MCF 10A (cell line): ENCODE measurements at regions of chr12 and their contacts with region 1.

Region 1: DNA sequence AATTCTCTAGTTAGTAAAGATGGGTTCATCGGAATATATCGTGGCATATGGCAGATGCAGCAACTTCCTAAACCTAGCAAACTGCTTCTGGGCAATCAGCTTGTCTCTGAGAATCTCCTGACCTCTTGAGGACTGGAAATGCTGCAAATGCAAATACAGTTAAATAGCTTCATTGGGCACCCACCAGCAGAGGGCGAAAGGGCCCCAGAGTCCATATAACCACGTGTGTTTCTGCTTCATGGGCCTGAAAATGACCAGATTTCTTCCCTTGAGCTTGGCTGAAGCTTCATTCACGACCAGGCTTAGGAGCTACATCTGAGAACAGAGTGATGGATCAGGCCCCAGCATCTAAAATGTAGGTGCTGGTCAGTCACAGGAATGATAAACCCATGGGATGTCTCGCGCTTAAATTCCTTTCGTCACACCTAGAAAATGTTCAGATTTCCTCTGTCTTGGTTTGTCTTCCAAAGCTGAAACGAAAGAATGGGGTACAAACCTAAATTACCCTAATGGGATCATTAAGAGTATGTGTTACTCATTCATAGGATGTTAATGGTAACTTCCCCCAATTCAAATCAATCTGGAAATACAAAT is 1482.5 kb upstream of the TMEM132C start:
- DNase-seq: peak; percentile 64
- H3K4me3 Mint-ChIP-seq: no peak overlapping the region
- H3K27ac Mint-ChIP-seq: no peak overlapping the region
- H3K4me1 Mint-ChIP-seq: no peaks in the 10 kb centered on the region
- H3K27me3 Mint-ChIP-seq: peaks cover 28% of the 10 kb centered on the region
- CTCF ChIP-seq: peak; percentile 70

Region 2: GRCh38 chr12:126811391-126811790 is 27.0 kb after region 1 on chr12:
- CTCF ChIA-PET with region 1: interaction called, 10 read pairs
- POLR2A ChIA-PET with region 1: no interaction called
- intact Hi-C with region 1: no loop called
- DNase-seq: no peak
- H3K4me3 Mint-ChIP-seq: no peak overlapping the region
- H3K27ac Mint-ChIP-seq: no peak overlapping the region
- H3K4me1 Mint-ChIP-seq: no peaks in the 10 kb centered on the region
- H3K27me3 Mint-ChIP-seq: peaks cover 13% of the 10 kb centered on the region
- CTCF ChIP-seq: no peak

Region 3: DNA sequence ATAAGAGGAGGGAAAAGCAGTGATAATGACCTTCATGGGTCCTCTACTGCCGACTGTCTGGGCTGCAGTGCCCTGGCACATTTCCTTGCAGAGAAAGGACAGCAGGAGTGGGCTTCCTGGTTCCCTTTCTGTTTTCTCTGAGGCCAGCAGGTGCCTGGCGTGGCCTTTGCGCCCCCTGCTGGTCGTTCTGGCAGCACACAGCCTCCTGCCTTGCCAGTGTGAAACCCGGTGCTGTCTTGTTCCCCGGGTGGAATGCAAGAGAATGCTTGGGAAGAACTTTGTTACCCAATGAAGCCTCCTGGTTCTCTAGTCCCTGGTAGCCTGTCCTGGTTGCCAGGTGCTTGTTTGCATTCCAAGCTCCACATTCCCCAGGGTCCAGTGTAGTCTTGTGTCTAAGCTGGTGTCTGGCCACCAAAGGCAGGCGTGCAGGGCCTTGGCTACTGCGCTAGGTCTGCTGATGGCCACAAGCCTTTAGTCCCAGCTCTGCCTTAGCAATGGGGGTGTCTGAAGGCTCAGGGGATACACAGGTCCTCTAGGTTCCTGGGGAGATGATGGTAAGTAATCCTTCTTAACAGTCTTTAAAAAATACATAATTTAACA is 90.1 kb after region 1 on chr12:
- CTCF ChIA-PET with region 1: interaction called, 39 read pairs
- POLR2A ChIA-PET with region 1: interaction called, 3 read pairs
- intact Hi-C with region 1: loop called (anchors 10 kb)
- DNase-seq: peak; percentile 60
- H3K4me3 Mint-ChIP-seq: no peak overlapping the region
- H3K27ac Mint-ChIP-seq: no peak overlapping the region
- H3K4me1 Mint-ChIP-seq: no peaks in the 10 kb centered on the region
- H3K27me3 Mint-ChIP-seq: no peaks in the 10 kb centered on the region
- CTCF ChIP-seq: peak; percentile 94

Region 4: GRCh38 chr12:127363392-127363791 is 579.0 kb after region 1 on chr12:
- CTCF ChIA-PET with region 1: interaction called, 3 read pairs
- POLR2A ChIA-PET with region 1: no interaction called
- intact Hi-C with region 1: loop called (anchors 1 kb)
- DNase-seq: peak; percentile 45
- H3K4me3 Mint-ChIP-seq: no peak overlapping the region
- H3K27ac Mint-ChIP-seq: no peak overlapping the region
- H3K4me1 Mint-ChIP-seq: no peaks in the 10 kb centered on the region
- H3K27me3 Mint-ChIP-seq: no peaks in the 10 kb centered on the region
- CTCF ChIP-seq: peak; percentile 24